Activated CD4-positive, alpha-beta T cell treated with anti-CD3 and anti-CD28 coated beads for 36 hours (primary cell): ENCODE measurements at regions of chr12 and their contacts with region 1.

Region 1: DNA sequence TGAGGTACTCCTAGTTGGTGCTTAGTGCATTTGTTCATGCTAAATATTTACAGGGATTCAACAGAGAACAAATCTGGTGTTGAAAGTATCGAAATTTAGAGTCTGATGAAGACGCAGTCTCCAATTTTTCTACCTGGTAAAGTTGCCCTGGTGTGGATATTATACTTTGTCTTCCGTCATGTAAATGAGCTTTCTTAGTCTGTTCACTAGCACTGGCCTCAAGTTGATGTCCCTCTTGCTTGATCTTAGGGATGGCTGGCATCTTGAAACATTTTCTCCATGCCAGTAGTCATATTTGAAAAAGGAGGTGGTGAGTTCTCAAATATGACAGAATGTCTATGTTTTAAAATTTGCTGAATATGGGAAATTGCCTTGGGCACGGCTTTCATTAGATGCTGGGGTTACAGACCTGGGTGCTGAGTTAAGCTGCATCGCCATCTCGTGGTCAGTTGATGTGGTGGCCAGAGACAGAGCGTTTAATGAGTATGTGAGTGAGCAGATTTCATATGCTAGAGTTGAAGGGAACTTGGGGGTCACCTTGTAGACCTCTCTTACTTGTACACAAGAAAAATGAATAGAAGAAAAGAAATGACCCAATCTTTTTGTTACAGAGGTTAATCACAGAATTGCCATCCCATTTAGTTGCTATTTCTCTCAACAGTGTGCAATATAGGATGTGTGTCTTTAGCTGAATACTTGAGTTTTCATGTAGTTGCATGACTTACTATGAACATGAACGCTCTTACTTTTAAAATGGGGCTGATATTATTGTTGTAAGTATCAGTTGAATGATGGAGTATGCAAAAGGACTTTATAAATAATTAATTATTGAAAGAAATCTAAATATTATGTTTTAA is 172.8 kb upstream of the DCN start:
- DNase-seq: peak; percentile 71
- ATAC-seq: peak; percentile 90
- H3K4me3 Mint-ChIP-seq: no peak overlapping the region
- H3K27ac Mint-ChIP-seq: no peak overlapping the region
- H3K4me1 Mint-ChIP-seq: no peaks in the 10 kb centered on the region
- H3K27me3 Mint-ChIP-seq: peaks cover 13% of the 10 kb centered on the region

Region 2: GRCh38 chr12:90940872-90941499 is 414.4 kb before region 1 on chr12:
- CTCF ChIA-PET with region 1: no interaction called
- POLR2A ChIA-PET with region 1: no interaction called
- intact Hi-C with region 1: loop called in 1 of 2 experiments (anchors 1 kb)
- DNase-seq: no peak
- ATAC-seq: no peak
- H3K4me3 Mint-ChIP-seq: no peak overlapping the region
- H3K27ac Mint-ChIP-seq: no peak overlapping the region
- H3K4me1 Mint-ChIP-seq: no peaks in the 10 kb centered on the region
- H3K27me3 Mint-ChIP-seq: peaks cover 4% of the 10 kb centered on the region